ENCODE measurements at regions of chr19 and their contacts with region 1.

Region 1: DNA sequence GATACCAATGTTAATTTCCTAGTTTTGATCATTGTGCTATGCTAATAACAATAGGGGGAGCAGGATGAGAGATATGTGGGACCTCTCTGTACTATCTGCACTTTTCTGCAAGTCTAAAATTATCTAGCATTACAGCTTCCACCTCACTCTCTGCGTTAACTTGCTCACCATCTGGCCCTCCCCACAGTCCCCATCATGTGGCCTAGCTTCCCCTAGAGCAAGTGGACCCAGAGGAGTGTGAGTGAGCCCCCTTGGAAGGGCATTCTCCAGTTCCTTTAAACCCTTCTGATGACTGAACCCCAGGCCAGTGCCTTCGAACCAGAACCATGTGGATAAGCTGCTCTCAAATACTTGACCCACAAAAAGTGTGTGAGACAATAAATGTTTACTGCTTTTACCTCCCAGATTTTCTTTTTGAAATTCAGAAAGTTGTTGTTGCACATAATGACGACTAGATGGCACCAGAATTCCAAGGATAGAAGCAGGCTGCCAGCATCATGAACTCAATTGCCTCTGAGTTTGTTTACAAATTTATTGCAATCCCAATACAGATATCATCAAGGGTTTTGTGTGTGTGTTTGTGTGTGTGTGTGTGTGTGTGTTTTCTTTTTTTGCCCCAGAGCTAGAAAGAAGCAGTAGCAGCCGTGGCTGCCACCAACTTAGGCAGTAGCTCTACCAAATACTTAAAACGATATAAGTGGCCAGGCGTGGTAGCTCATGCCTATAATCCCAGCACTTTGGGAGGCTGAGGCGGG is 49.0 kb upstream of the ZNF780A start:
- DNase-seq: peak; percentile 47
- CTCF ChIP-seq: peak; percentile 60

Region 2: GRCh38 chr19:40103600-40103999 is 36.1 kb before region 1 on chr19:
- CTCF ChIA-PET with region 1: no interaction called
- POLR2A ChIA-PET with region 1: no interaction called
- DNase-seq: no peak
- CTCF ChIP-seq: no peak

Region 3: DNA sequence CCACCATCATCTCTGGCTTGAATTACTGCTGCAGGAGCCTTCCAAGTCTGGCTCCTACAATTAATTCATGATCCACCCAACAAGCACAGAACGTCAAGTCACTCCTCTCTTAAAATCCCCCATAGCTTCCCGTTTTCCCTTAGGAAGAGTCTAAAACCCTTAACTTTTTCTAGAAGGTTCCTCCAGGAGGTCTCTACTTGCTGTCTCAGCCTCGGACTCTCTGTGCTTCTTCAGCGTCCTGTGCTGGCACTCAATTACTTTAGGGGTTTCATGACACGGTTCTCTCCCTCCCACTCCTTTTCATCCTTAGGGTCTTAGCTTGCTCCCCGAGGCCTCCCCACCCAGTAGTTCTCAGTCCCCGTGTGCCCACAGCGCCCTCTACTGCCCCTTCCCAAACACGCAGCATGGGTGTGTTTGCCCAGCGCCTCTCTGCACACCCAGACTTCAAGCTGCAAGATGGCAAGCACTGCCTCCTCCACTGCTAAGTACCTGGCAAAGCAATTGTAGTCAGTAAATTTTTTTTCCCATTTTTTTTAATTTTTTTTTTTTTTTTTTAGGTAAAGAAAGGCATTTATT is 25.7 kb after region 1 on chr19:
- CTCF ChIA-PET with region 1: interaction called, 24 read pairs
- POLR2A ChIA-PET with region 1: no interaction called
- DNase-seq: peak; percentile 68
- CTCF ChIP-seq: peak; percentile 84

Region 4: GRCh38 chr19:40217027-40217810 is 77.5 kb after region 1 on chr19:
- CTCF ChIA-PET with region 1: interaction called, 11 read pairs
- POLR2A ChIA-PET with region 1: no interaction called
- DNase-seq: no peak
- CTCF ChIP-seq: no peak

Region 5: GRCh38 chr19:40294560-40294959 is 154.8 kb after region 1 on chr19:
- CTCF ChIA-PET with region 1: no interaction called
- POLR2A ChIA-PET with region 1: no interaction called
- DNase-seq: no peak
- CTCF ChIP-seq: no peak